Activated CD4-positive, alpha-beta memory T cell treated with anti-CD3 and anti-CD28 coated beads for 36 hours (primary cell): ENCODE measurements at regions of chr1 and their contacts with region 1.

Region 1: DNA sequence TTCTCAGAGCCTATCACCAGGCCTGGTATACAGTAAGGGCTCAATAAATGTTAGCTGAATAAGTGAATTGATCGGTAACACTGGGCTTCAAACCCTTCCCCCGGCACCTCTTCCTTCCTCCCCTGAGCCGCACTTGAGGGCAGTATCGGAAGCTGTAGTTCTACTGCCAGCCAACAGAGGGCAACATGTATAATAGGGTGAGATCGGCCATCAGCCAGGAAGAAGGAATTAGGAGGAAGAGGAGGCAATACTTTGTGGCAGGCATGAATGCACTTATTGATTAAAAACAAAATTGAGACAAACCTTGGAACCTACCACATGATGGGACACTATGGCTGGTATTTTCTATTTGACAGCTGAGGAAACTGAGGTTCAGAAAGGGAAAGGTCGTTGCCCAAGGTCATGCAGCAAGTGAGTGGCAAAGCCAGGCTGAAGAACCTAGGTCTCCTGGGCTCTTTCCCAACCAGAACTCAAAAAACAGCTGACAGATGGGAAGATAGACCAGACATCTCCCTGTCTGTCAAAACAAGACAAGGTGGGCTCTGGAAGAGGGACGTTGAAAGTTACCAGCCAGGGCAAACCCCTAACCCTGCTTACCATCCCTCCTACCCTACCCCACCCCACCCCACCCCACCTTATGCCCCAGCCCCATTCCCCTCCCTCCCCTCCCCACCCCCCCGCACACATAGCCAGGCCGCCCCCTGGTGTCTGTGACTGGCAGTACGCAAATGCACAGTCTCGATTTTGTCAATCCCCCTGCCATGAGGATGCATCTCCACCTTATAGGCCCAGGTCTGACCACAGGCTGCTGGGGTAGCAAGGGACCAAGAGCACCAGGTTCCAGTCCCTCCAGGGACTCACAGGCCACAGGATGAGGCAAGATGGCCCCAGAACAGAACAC is 107.3 kb upstream of the RUNX3 start:
- DNase-seq: peak; percentile 84
- H3K4me3 Mint-ChIP-seq: peak overlapping the region; percentile 13
- H3K27ac Mint-ChIP-seq: peak overlapping the region; percentile 71
- H3K4me1 Mint-ChIP-seq: peaks cover 28% of the 10 kb centered on the region
- H3K27me3 Mint-ChIP-seq: peaks cover 3% of the 10 kb centered on the region

Region 2: GRCh38 chr1:24909388-24909898 is 128.0 kb before region 1 on chr1:
- CTCF ChIA-PET with region 1: interaction called, 12 read pairs
- POLR2A ChIA-PET with region 1: no interaction called
- intact Hi-C with region 1: no loop called
- DNase-seq: no peak
- H3K4me3 Mint-ChIP-seq: no peak overlapping the region
- H3K27ac Mint-ChIP-seq: peak overlapping the region; percentile 81
- H3K4me1 Mint-ChIP-seq: peaks cover 52% of the 10 kb centered on the region
- H3K27me3 Mint-ChIP-seq: no peaks in the 10 kb centered on the region

Region 3: GRCh38 chr1:24941564-24941963 is 95.9 kb before region 1 on chr1:
- CTCF ChIA-PET with region 1: interaction called, 290 read pairs
- POLR2A ChIA-PET with region 1: interaction called, 3 read pairs
- intact Hi-C with region 1: no loop called
- DNase-seq: no peak
- H3K4me3 Mint-ChIP-seq: no peak overlapping the region
- H3K27ac Mint-ChIP-seq: no peak overlapping the region
- H3K4me1 Mint-ChIP-seq: peaks cover 13% of the 10 kb centered on the region
- H3K27me3 Mint-ChIP-seq: no peaks in the 10 kb centered on the region

Region 4: DNA sequence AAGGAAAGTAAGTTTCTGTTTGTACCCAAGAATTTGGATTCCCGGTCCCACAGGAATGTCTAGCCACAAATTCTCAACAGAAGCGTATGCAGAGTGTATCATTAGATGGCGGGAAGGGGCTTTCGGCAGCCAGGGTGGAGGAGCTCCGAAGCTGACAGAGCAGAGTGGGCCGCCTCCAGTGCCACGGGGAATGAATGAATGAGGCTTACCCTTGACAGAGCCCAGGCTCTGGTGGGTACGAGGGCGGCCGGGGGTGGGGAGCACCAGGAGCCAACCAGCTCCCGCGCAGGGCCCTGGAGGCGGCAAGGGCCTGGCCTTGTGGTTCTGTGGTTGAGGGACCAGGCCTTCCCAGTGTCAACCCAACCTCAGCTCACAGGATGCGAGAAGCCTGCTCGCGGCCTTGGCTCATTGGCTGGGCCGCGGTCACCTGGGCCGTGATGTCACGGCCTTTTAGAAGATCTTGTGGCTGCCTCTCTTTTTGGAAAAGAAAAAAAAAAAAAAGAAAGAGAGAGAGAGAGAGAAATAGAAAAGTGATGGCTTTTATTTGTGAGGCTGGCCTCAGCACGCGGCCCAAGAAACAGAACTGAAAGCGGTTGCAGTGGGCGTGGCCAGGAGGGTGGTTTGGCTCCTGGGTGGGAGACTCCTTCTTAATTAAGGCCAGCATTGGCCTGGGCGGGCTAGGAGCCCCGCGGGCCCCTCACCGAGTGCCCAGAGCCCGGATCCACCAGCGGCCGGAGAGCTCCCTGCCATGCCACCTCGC is 72.4 kb before region 1 on chr1:
- CTCF ChIA-PET with region 1: interaction called, 137 read pairs
- POLR2A ChIA-PET with region 1: interaction called, 20 read pairs
- intact Hi-C with region 1: loop called (anchors 1 kb)
- DNase-seq: peak; percentile 97
- H3K4me3 Mint-ChIP-seq: peak overlapping the region; percentile 93
- H3K27ac Mint-ChIP-seq: peak overlapping the region; percentile 97
- H3K4me1 Mint-ChIP-seq: peaks cover 78% of the 10 kb centered on the region
- H3K27me3 Mint-ChIP-seq: no peaks in the 10 kb centered on the region

Region 5: GRCh38 chr1:25006770-25007169 is 30.7 kb before region 1 on chr1:
- CTCF ChIA-PET with region 1: interaction called, 11 read pairs
- POLR2A ChIA-PET with region 1: no interaction called
- intact Hi-C with region 1: no loop called
- DNase-seq: no peak
- H3K4me3 Mint-ChIP-seq: no peak overlapping the region
- H3K27ac Mint-ChIP-seq: no peak overlapping the region
- H3K4me1 Mint-ChIP-seq: peaks cover 56% of the 10 kb centered on the region
- H3K27me3 Mint-ChIP-seq: no peaks in the 10 kb centered on the region